ENCODE measurements at regions of chr4 and their contacts with region 1.

Region 1: GRCh38 chr4:124334119-124334518 is 378.4 kb downstream of the ANKRD50 start:
- H3K4me3 ChIP-seq: no peak overlapping the region
- H3K27ac ChIP-seq: no peak overlapping the region
- H3K4me1 ChIP-seq: no peaks in the 10 kb centered on the region
- CTCF ChIP-seq: no peak

Region 2: DNA sequence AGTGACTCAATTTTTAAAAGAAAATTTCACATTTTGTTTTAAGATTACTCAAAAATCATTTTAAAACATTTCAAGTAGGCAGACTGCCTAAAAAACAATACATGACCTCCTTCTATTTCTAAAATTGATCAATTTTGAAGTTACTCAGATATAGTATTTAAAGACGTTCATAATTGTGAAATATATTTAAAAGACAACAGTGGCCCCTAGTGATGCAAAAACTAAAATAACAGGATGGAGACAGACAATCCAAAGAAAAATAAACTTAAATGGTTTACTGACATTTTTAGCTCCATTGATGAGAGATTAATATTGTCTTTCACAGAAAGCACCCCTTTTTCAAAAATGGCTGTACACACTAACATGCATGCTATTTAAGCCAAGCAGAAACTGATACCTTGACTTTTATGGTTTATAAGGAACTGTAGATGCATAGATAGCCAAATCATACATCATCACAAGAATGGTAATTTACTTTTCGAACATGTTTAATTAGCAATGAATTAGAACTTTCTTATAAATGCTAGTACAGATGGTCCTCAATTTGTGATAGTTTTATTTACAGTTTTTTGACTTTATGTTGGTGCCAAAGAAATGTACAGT is 910.8 kb after region 1 on chr4:
- CTCF ChIA-PET with region 1: interaction called, 16 read pairs
- POLR2A ChIA-PET with region 1: no interaction called
- H3K4me3 ChIP-seq: no peak overlapping the region
- H3K27ac ChIP-seq: no peak overlapping the region
- H3K4me1 ChIP-seq: no peaks in the 10 kb centered on the region
- CTCF ChIP-seq: no peak

Region 3: GRCh38 chr4:125283707-125284279 is 949.7 kb after region 1 on chr4:
- CTCF ChIA-PET with region 1: interaction called, 20 read pairs
- POLR2A ChIA-PET with region 1: no interaction called
- H3K4me3 ChIP-seq: no peak overlapping the region
- H3K27ac ChIP-seq: no peak overlapping the region
- H3K4me1 ChIP-seq: no peaks in the 10 kb centered on the region; the same call in 1 of the 2 replicates
- CTCF ChIP-seq: no peak

Measured in HEK293 (cell line).